CD4-positive, alpha-beta memory T cell (primary cell): ENCODE measurements at regions of chr11 and their contacts with region 1.

Region 1: DNA sequence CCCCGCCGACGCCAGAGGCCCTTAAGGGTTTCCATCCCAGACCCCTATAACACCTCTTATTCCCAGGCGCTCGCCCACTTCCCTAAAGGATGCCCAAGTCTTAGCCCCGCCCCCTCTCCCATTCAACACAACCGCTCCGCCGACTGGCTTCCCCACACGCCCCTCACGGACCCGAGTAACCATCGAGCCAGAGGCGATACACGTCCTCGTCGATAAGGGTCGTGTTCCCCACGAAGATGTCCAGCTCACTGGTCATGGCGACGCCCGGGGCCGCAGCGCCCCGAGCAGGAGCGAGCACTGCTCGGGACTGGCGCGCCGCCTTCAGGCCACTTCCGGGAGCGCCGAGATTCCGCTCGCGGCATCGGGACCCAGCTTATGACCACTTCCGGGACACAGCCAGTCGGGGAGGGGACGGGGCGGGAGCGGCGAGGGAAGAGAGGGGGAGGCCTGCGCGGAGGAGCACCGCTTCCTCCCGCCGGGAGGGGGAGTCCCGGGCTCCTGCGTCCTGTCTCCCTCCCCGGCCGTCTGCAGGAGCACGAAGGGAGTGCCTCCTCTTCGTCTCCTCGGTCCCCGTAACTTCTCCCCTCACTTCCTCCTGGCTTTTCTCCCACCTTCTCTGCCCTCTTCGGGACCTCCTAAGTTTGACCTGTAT is at the start of gene FIBP:
- DNase-seq: peak; percentile 90 to 97 (median 91)
- H3K4me3 ChIP-seq: peak within 1 kb of the TSS; percentile 79 to 83
- H3K4me3 Mint-ChIP-seq: peak within 1 kb of the TSS; percentile 86 to 97 (median 91)
- H3K27ac ChIP-seq: peak within 1 kb of the TSS; percentile 86
- H3K27ac Mint-ChIP-seq: peak within 1 kb of the TSS; percentile 95 to 100 (median 99)
- H3K4me1 ChIP-seq: peaks cover 63% of the 10 kb centered on the region
- H3K4me1 Mint-ChIP-seq: peaks cover 34 to 73% (median 56%) of the 10 kb centered on the region in 4 donors
- H3K27me3 ChIP-seq: no peaks in the 10 kb centered on the region
- H3K27me3 Mint-ChIP-seq: no peaks in the 10 kb centered on the region
- total RNA-seq, gene FIBP: 39.9 to 42.1 TPM

Region 2: GRCh38 chr11:65711785-65712632 is 176.3 kb before region 1 on chr11 and contains the start of gene KAT5:
- CTCF ChIA-PET with region 1: interaction called, 30 read pairs
- POLR2A ChIA-PET with region 1: interaction called, 28 read pairs
- intact Hi-C with region 1: loop called (anchors 1 kb)
- DNase-seq: peak; percentile 98 to 100 (median 99)
- H3K4me3 ChIP-seq: peak within 1 kb of the TSS; percentile 63 to 98
- H3K4me3 Mint-ChIP-seq: peak within 1 kb of the TSS; percentile 93 to 99 (median 96)
- H3K27ac ChIP-seq: peak within 1 kb of the TSS; percentile 98
- H3K27ac Mint-ChIP-seq: peak within 1 kb of the TSS; percentile 99 to 100 (median 99)
- H3K4me1 ChIP-seq: peaks cover 19% of the 10 kb centered on the region
- H3K4me1 Mint-ChIP-seq: peaks cover 9 to 38% (median 24%) of the 10 kb centered on the region in 4 donors
- H3K27me3 ChIP-seq: no peaks in the 10 kb centered on the region
- H3K27me3 Mint-ChIP-seq: no peaks in the 10 kb centered on the region
- total RNA-seq, gene KAT5: 93.5 to 106 TPM

Region 3: DNA sequence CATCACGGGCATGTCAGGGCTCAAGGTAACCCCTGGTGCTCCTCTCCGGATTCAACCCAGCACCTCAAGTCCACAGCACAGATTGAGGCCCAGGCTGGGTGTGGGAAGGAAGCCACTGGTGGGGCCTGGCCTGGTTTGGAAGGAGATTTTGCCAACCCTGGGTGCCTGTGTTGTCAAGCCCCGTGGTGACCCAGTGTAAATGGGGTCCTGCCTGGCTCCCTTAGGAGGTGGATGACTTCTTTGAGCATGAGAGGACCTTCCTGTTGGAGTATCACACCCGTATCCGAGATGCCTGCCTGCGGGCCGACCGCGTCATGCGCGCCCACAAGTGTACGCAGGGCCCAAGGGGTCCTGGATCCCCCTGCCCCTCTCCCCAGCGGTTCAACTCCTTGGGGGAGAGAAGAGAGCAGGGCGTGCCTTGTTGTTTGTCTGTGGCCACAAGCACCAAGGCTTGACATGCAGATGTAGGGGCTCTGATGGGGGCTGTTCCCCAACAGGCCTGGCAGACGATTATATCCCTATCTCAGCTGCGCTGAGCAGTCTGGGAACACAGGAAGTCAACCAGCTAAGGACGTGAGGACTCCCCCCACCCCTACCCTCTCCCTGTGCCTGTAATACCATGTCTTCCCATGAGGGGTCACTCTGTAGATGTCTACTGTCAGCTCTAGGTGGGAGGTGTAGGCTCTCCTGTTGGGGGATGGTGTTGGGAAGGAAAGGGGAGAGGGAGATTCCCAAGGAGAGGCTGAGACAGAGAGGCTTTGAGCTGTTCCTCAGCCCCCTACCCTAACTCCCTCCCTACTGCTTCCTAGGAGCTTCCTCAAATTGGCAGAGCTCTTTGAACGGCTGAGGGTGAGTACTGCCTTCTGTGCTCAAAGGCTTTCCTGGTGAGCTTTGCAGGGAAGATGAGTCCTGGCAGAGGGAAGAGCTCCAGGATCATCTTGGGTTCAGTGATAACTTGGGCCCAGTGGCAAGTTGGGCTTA is 37.2 kb before region 1 on chr11:
- CTCF ChIA-PET with region 1: interaction called, 281 read pairs
- POLR2A ChIA-PET with region 1: interaction called, 9 read pairs
- intact Hi-C with region 1: no loop called
- DNase-seq: no peak
- H3K4me3 ChIP-seq: no peak overlapping the region
- H3K4me3 Mint-ChIP-seq: no peak overlapping the region
- H3K27ac ChIP-seq: no peak overlapping the region
- H3K27ac Mint-ChIP-seq: peak overlapping the region in 1 of 7 donors; percentile 74
- H3K4me1 ChIP-seq: peaks cover 23% of the 10 kb centered on the region
- H3K4me1 Mint-ChIP-seq: peaks cover 15 to 37% (median 26%) of the 10 kb centered on the region in 4 donors
- H3K27me3 ChIP-seq: no peaks in the 10 kb centered on the region
- H3K27me3 Mint-ChIP-seq: no peaks in the 10 kb centered on the region

Region 4: GRCh38 chr11:65873318-65874156 is 14.8 kb before region 1 on chr11:
- CTCF ChIA-PET with region 1: interaction called, 104 read pairs
- POLR2A ChIA-PET with region 1: interaction called, 53 read pairs
- intact Hi-C with region 1: loop called (anchors 2 kb)
- DNase-seq: peak; percentile 94 to 99 (median 96)
- H3K4me3 ChIP-seq: peak overlapping the region; percentile 57 to 69
- H3K4me3 Mint-ChIP-seq: peak overlapping the region; percentile 71 to 95 (median 89)
- H3K27ac ChIP-seq: peak overlapping the region; percentile 77
- H3K27ac Mint-ChIP-seq: peak overlapping the region; percentile 85 to 96 (median 94)
- H3K4me1 ChIP-seq: peaks cover 20% of the 10 kb centered on the region
- H3K4me1 Mint-ChIP-seq: peaks cover 7 to 45% (median 20%) of the 10 kb centered on the region in 4 donors
- H3K27me3 ChIP-seq: no peaks in the 10 kb centered on the region
- H3K27me3 Mint-ChIP-seq: no peaks in the 10 kb centered on the region

Region 5: GRCh38 chr11:65911682-65912568 is 23.6 kb after region 1 on chr11:
- CTCF ChIA-PET with region 1: interaction called, 13 read pairs
- POLR2A ChIA-PET with region 1: interaction called, 320 read pairs
- intact Hi-C with region 1: no loop called
- DNase-seq: no peak
- H3K4me3 ChIP-seq: no peak overlapping the region
- H3K4me3 Mint-ChIP-seq: no peak overlapping the region
- H3K27ac ChIP-seq: no peak overlapping the region
- H3K27ac Mint-ChIP-seq: no peak overlapping the region
- H3K4me1 ChIP-seq: peaks cover 12% of the 10 kb centered on the region
- H3K4me1 Mint-ChIP-seq: peaks cover 11 to 30% (median 20%) of the 10 kb centered on the region in 4 donors
- H3K27me3 ChIP-seq: no peaks in the 10 kb centered on the region
- H3K27me3 Mint-ChIP-seq: peaks cover 3 to 7% of the 10 kb centered on the region in 2 donors

Region 6: GRCh38 chr11:65937766-65938165 is 49.5 kb after region 1 on chr11:
- CTCF ChIA-PET with region 1: interaction called, 17 read pairs
- POLR2A ChIA-PET with region 1: interaction called, 5 read pairs
- intact Hi-C with region 1: no loop called
- DNase-seq: no peak
- H3K4me3 ChIP-seq: no peak overlapping the region
- H3K4me3 Mint-ChIP-seq: no peak overlapping the region
- H3K27ac ChIP-seq: no peak overlapping the region
- H3K27ac Mint-ChIP-seq: no peak overlapping the region
- H3K4me1 ChIP-seq: no peaks in the 10 kb centered on the region
- H3K4me1 Mint-ChIP-seq: no peaks in the 10 kb centered on the region
- H3K27me3 ChIP-seq: no peaks in the 10 kb centered on the region
- H3K27me3 Mint-ChIP-seq: no peaks in the 10 kb centered on the region

Region 7: DNA sequence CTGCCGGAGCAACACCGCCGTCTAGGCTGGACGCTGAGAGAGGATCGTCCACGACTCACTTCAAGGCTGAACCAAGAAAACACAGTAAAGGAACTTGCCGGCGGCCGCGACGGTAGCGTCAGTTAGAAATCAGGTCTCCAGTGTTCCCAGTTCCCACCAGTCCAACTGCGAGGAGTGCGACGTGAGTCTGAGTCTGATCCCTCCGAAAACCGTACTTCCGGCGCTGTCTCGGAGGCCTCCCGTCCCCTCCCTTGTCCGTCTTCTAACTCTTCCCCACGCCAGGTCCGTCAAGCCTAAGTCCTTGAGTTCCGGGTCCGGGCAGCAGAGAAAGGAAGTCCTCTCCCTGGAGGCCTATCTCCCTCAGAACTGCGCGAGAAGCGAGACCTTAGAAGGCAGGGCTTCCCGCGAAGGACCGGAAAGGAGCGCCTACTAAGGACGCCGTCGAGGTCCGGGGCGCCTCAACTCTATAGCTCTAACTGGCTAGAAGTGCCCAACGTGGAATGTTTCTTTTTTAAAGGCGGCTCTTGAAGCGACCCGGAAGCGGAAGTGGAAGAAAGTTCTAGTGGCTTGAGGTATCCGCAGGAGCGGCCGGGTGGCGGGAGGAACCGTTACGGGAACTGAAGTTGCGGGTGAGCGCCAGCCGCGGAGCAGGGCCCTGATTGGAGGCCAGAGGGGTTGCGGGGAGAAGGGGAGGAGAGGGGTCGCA is 113.8 kb after region 1 on chr11 and contains the starts of genes BANF1 and EIF1AD:
- CTCF ChIA-PET with region 1: interaction called, 10 read pairs
- POLR2A ChIA-PET with region 1: interaction called, 44 read pairs
- intact Hi-C with region 1: no loop called
- DNase-seq: peak; percentile 95 to 97 (median 96)
- H3K4me3 ChIP-seq: peak within 1 kb of the TSS; percentile 68 to 82
- H3K4me3 Mint-ChIP-seq: peak within 1 kb of the TSS; percentile 94 to 100 (median 99)
- H3K27ac ChIP-seq: peak within 1 kb of the TSS; percentile 87
- H3K27ac Mint-ChIP-seq: peak within 1 kb of the TSS; percentile 96 to 99 (median 99)
- H3K4me1 ChIP-seq: peaks cover 26% of the 10 kb centered on the region
- H3K4me1 Mint-ChIP-seq: peaks cover 12 to 49% (median 27%) of the 10 kb centered on the region in 4 donors
- H3K27me3 ChIP-seq: no peaks in the 10 kb centered on the region
- H3K27me3 Mint-ChIP-seq: no peaks in the 10 kb centered on the region
- total RNA-seq, gene BANF1: 90.8 to 92.9 TPM
- total RNA-seq, gene EIF1AD: 60.2 to 65.4 TPM